A549 (cell line): ENCODE measurements at regions of chr17 and their contacts with region 1.

Region 1: DNA sequence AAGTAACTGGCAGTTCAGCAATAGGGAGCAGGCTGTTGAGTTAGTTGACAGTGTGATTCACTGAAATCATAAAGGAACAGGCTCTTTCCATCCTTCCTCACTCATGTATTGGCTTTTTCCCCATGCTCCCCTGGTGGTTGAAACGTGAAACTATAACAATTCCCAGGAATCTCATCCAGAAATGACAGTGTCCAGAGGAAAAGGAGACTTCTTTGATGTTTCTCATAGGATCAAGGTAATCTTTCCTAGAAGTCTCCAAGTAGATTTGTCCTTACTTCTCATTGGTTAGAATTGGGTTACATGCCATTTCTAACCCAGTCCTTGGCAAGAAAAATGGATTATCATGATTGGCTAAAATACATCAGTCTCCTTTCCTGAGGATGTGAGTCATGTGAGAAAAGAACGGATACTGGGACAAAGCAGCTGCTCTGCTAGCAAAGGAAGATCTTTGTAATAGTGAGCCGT is 14.4 kb downstream of the TTC19 start:
- DNase-seq: peak; percentile 48 to 78
- ATAC-seq: peak; percentile 91 to 97
- H3K4me3 ChIP-seq: no peak overlapping the region
- H3K27ac ChIP-seq: no peak overlapping the region
- H3K4me1 ChIP-seq: peaks cover 28% of the 10 kb centered on the region
- CTCF ChIP-seq: peak; percentile 59
- EP300 ChIP-seq: no peak
- POLR2A ChIP-seq: no peak
- RAD21 ChIP-seq: peak; percentile 34 to 46; a peak in 2 of 5 replicates

Region 2: DNA sequence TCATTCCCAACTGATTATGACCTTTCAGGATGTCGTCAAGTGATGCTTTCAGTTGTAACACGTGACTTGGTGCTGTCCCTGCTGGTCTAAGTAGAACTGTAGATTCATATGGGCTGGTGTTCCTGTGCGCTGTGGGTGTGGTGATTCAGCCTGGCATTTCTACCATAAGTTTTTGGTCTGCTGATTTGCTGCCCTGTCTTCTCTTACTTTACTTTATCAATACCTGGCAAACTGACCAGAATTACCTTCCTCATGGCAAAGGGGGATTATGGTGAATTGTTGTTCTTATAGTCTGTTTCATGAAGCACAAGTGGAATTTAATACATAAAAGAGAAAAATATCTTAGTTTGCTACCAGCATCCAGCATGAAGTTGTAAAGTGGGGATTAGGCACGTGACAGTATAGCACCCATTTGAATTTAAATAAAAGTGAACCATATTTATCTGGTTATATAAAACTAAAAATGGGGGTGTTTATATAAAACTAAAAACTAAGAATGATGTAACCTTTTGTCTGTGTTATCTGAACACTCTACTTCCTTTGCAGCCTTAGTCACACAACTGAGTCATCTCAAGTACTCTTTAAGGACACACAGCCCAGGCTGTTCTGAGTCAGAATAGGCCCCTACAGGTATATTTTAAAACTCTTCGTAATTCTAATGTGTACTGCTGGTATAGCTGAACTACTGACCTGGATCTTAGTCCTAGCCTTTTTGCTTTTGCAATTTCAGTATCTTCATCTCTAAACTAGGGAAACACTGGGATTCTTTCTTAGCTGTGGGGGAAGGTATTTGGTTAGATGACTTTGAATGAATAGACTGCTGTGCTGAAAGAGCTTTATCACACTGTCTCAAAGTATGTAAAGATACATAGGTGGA is 14.0 kb after region 1 on chr17:
- CTCF ChIA-PET with region 1: interaction called, 35 read pairs
- POLR2A ChIA-PET with region 1: no interaction called
- DNase-seq: peak; percentile 92 to 95
- ATAC-seq: peak; percentile 95 to 96
- H3K4me3 ChIP-seq: peak overlapping the region; percentile 15; the same call in 2 of the 3 replicates
- H3K27ac ChIP-seq: peak overlapping the region; percentile 85 to 86
- H3K4me1 ChIP-seq: peaks cover 31% of the 10 kb centered on the region
- CTCF ChIP-seq: no peak
- EP300 ChIP-seq: peak in 1 of 2 experiments; percentile 60; a peak in 1 of 5 replicates
- POLR2A ChIP-seq: no peak
- RAD21 ChIP-seq: peak in 1 of 2 experiments; percentile 20; a peak in 1 of 5 replicates

Region 3: GRCh38 chr17:16106161-16106891 is 92.4 kb after region 1 on chr17:
- CTCF ChIA-PET with region 1: no interaction called
- POLR2A ChIA-PET with region 1: no interaction called
- DNase-seq: no peak
- ATAC-seq: no peak
- H3K4me3 ChIP-seq: no peak overlapping the region
- H3K27ac ChIP-seq: no peak overlapping the region
- H3K4me1 ChIP-seq: peaks cover 5% of the 10 kb centered on the region; the same call in 1 of the 3 replicates
- CTCF ChIP-seq: no peak
- EP300 ChIP-seq: no peak
- POLR2A ChIP-seq: no peak
- RAD21 ChIP-seq: no peak